Mammary epithelial cell (primary cell): ENCODE measurements at regions of chr9 and their contacts with region 1.

Region 1: GRCh38 chr9:129177791-129178559 is at the start of gene IER5L:
- DNase-seq: peak; percentile 90
- H3K4me3 ChIP-seq: peak within 1 kb of the TSS; percentile 89 to 97 (median 97)
- H3K27ac ChIP-seq: no peak within 1 kb of the TSS
- H3K4me1 ChIP-seq: peaks cover 32% of the 10 kb centered on the region
- H3K27me3 ChIP-seq: no peaks in the 10 kb centered on the region
- CTCF ChIP-seq: peak in 1 of 2 donors; percentile 8
- total RNA-seq, gene IER5L: 13.5 to 34.2 TPM

Region 2: GRCh38 chr9:127742435-127743088 is 1435.4 kb before region 1 on chr9:
- CTCF ChIA-PET with region 1: no interaction called
- dilution Hi-C with region 1: no loop called
- in situ Hi-C with region 1: no loop called
- intact Hi-C with region 1: no loop called
- DNase-seq: peak; percentile 27
- H3K4me3 ChIP-seq: no peak overlapping the region
- H3K27ac ChIP-seq: no peak overlapping the region
- H3K4me1 ChIP-seq: peaks cover 21% of the 10 kb centered on the region
- H3K27me3 ChIP-seq: no peaks in the 10 kb centered on the region
- CTCF ChIP-seq: no peak

Region 3: DNA sequence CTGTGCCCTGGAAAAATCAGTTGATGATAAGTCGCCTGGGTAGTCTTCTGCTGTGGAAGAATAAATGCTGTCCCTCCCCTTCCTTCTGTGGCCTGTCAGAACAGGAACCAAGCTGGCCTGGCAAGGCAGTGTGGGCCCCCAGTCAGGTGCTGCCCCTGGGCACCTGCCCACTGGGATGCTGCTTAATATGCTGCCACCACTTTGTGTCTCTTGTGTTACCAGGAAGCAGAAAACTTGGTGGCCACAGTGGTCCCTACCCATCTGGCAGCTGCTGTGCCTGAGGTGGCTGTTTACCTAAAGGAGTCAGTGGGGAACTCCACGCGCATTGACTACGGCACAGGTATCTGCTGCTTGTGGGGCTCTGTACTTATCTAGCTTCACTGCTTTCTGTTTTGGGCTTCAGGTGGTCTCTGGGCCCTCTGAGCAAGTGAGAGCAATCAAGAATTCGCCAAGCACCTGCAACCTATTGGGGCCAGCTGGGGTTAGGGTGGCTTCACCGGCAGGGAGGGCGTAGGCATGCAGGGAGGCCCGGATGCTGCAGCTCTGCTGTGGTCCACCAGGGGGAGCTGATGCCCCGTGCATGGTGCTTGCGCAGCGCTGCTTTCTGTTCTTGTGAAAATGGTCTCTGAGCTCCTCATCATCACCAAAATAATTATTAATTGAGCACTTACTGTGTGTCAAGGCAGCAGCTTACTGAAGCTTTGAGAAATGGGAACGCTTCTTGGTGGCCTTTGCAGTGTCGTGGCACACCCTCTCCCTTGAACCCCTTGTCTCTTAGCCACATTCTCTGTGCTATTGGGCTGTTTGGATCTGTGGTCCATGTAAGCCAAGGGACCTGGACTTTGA is 46.5 kb before region 1 on chr9:
- CTCF ChIA-PET with region 1: no interaction called
- dilution Hi-C with region 1: loop called (anchors 5 kb)
- in situ Hi-C with region 1: no loop called
- intact Hi-C with region 1: no loop called
- DNase-seq: peak; percentile 50
- H3K4me3 ChIP-seq: no peak overlapping the region
- H3K27ac ChIP-seq: no peak overlapping the region
- H3K4me1 ChIP-seq: no peaks in the 10 kb centered on the region
- H3K27me3 ChIP-seq: no peaks in the 10 kb centered on the region
- CTCF ChIP-seq: peak; percentile 99

Region 4: GRCh38 chr9:129225815-129226214 is 47.8 kb after region 1 on chr9:
- CTCF ChIA-PET with region 1: no interaction called
- dilution Hi-C with region 1: loop called (anchors 5 kb)
- in situ Hi-C with region 1: no loop called
- intact Hi-C with region 1: loop called (anchors 5 kb)
- DNase-seq: peak; percentile 67
- H3K4me3 ChIP-seq: no peak overlapping the region
- H3K27ac ChIP-seq: no peak overlapping the region
- H3K4me1 ChIP-seq: peaks cover 13% of the 10 kb centered on the region
- H3K27me3 ChIP-seq: no peaks in the 10 kb centered on the region
- CTCF ChIP-seq: peak in 1 of 2 donors; percentile 6

Region 5: GRCh38 chr9:129383561-129384416 is 205.8 kb after region 1 on chr9:
- CTCF ChIA-PET with region 1: no interaction called
- dilution Hi-C with region 1: no loop called
- in situ Hi-C with region 1: no loop called
- intact Hi-C with region 1: loop called (anchors 1 kb)
- DNase-seq: peak; percentile 73
- H3K4me3 ChIP-seq: peak overlapping the region; percentile 37 to 58 (median 45)
- H3K27ac ChIP-seq: no peak overlapping the region
- H3K4me1 ChIP-seq: peaks cover 16% of the 10 kb centered on the region
- H3K27me3 ChIP-seq: no peaks in the 10 kb centered on the region
- CTCF ChIP-seq: peak in 1 of 2 donors; percentile 31

Region 6: DNA sequence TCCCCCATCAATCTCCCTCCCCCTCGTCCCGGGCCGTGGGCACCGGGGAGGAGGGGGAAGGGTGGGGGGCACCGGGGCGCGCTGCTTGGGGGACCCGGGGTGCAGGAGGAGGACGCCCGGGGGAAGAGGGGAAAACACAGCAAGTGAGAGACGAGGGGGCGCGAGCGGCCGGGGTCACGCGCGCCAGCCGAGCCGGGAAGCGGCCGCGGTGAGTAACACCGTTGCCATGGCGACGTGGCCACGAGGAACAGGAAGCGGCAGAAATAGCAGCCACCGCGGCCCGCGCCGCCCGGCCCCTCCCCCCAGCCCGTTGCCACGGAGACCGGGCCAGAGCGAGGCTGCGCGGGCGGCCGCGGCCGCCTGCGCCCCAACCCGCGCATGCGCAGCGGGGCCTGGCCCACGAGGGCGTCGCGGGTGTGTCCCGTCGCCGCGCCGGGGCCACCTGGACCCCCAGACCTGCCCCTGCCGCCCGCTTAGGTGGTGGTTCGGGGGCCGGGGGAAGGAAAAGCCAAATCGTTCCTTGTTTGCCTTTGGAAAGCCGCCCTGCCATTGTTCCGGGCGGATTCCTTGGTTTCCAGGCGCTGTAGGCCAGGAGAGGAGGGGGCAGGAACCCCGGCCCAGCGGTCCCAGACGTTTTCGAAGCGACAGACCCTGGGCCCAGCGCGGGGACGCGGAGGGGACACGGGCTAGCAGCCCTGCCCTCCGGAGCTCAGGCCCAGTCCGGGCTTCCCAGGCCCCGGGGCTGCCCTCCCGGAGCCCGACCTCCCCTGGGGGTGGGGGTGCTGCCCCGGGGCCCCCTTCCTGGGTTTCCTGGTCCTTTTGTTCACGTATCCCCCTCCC is 235.8 kb after region 1 on chr9:
- CTCF ChIA-PET with region 1: no interaction called
- dilution Hi-C with region 1: no loop called
- in situ Hi-C with region 1: no loop called
- intact Hi-C with region 1: loop called (anchors 2 kb)
- DNase-seq: peak; percentile 89
- H3K4me3 ChIP-seq: peak overlapping the region; percentile 59 to 66 (median 59)
- H3K27ac ChIP-seq: peak overlapping the region; percentile 97
- H3K4me1 ChIP-seq: peaks cover 16% of the 10 kb centered on the region
- H3K27me3 ChIP-seq: no peaks in the 10 kb centered on the region
- CTCF ChIP-seq: no peak

Region 7: GRCh38 chr9:129432297-129433154 is 254.6 kb after region 1 on chr9:
- CTCF ChIA-PET with region 1: no interaction called
- dilution Hi-C with region 1: no loop called
- in situ Hi-C with region 1: no loop called
- intact Hi-C with region 1: no loop called
- DNase-seq: no peak
- H3K4me3 ChIP-seq: no peak overlapping the region
- H3K27ac ChIP-seq: no peak overlapping the region
- H3K4me1 ChIP-seq: peaks cover 3% of the 10 kb centered on the region
- H3K27me3 ChIP-seq: peaks cover 11% of the 10 kb centered on the region
- CTCF ChIP-seq: no peak

Region 8: DNA sequence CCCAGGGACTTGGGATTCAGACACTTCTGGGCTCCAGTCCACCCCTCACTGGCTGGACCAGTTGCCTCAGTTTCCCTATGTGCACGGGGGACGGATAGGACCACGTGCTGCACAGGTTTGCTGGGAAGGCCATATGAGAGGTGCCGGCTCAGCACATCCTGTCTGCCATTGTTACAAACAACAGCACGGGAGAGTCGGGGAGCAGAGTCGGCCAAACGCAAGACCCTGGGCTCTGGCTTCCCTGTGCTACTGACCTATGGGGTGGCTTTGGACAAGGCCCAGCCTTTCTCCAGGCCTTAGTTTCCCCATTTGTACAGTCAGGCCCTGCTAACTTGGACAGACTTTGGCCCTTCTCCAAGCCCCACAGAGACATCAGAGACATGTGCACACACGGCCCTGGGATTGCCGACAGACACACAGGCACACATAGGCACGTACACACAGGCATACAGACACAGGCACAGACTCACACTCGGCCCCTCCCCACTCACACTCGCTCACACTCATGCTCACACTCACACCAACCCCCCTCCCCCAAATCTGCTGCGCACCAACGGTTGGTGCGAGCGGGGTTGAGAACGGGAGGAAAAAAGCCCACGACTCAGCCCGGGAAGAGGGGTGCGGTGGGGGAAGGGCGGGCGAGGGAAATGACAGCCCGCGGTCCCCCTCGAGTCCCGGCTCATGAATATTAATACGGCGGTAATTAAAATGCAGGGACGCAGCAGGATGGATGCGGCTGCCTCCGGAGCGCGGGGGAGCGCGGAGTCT is 309.9 kb after region 1 on chr9:
- CTCF ChIA-PET with region 1: no interaction called
- dilution Hi-C with region 1: no loop called
- in situ Hi-C with region 1: no loop called
- intact Hi-C with region 1: loop called (anchors 2 kb)
- DNase-seq: peak; percentile 50
- H3K4me3 ChIP-seq: peak overlapping the region in 1 of 3 experiments; percentile 29
- H3K27ac ChIP-seq: peak overlapping the region; percentile 38
- H3K4me1 ChIP-seq: peaks cover 48% of the 10 kb centered on the region
- H3K27me3 ChIP-seq: no peaks in the 10 kb centered on the region
- CTCF ChIP-seq: no peak